Natural killer cell (primary cell): ENCODE measurements at regions of chrX and their contacts with region 1.

Region 1: DNA sequence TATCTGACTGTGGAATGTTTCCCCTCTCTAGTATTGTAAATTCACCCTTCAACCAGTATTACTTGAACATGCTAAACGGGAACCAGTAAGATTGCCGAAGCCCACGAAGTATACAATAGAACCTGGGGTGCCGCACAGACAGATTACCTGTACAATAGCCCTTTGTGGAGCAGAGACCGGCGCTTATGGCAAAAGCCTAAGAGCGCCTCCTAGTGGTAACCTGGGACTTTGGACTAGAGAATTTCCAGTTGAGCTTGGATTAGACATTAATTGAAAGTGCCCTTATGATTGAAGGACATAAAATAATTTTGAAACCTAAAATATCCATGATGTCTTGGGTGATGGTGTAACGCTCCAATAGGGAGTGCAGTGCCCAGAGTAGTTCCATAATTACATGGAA is 14.1 kb downstream of the ZNF157 start:
- DNase-seq: peak; percentile 39 to 88
- ATAC-seq: peak; percentile 71 to 82 (median 76)
- H3K4me3 ChIP-seq: no peak overlapping the region
- H3K4me3 Mint-ChIP-seq: no peak overlapping the region
- H3K27ac ChIP-seq: no peak overlapping the region
- H3K27ac Mint-ChIP-seq: no peak overlapping the region
- H3K4me1 ChIP-seq: peaks cover 15% of the 10 kb centered on the region
- H3K4me1 Mint-ChIP-seq: peaks cover 13 to 19% of the 10 kb centered on the region in 2 donors
- H3K27me3 ChIP-seq: no peaks in the 10 kb centered on the region
- H3K27me3 Mint-ChIP-seq: peaks cover 0 to 11% of the 10 kb centered on the region in 2 donors
- CTCF ChIP-seq: peak; percentile 73

Region 2: DNA sequence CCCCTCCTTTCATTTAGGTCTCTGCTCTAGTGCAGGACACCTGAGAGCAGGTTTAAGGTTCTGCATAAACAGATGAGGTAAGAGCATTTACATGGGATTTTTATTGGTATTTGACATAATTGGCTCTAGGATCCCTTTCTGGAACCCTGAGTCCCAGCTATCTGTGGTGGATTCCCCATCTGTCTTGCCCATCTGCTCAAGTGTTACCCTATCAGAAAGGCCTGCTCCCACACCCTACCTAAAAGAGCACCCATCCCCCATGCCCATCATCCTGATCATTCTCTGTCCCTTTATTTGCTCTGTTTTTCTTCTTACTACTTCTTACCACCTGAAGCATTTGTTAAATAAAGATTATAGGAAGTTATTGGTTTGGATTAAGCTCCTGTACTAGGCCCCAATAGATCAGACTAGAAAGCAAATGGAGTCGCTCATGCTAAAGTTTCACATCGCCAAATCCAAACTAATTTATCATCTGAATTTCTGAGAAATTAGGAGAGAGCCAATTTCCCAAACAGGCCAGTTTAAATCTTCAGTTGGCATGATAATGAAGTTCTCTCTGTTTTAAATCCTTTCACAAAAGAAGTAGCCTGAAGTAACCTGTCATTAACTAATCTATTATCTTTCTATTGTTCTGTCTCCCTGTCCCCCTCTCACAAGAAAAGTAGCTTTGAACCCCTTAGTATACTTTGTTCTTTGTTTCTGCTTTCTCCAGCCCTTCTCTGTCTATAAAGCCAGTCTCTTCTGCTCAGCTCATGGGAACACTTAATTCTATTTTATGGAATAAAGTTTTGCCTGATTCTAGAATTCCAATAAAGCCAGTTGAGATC is 1017.9 kb before region 1 on chrX:
- intact Hi-C with region 1: no loop called
- DNase-seq: no peak
- ATAC-seq: no peak
- H3K4me3 ChIP-seq: no peak overlapping the region
- H3K4me3 Mint-ChIP-seq: no peak overlapping the region
- H3K27ac ChIP-seq: no peak overlapping the region
- H3K27ac Mint-ChIP-seq: no peak overlapping the region
- H3K4me1 ChIP-seq: no peaks in the 10 kb centered on the region
- H3K4me1 Mint-ChIP-seq: no peaks in the 10 kb centered on the region
- H3K27me3 ChIP-seq: no peaks in the 10 kb centered on the region
- H3K27me3 Mint-ChIP-seq: no peaks in the 10 kb centered on the region
- CTCF ChIP-seq: no peak

Region 3: GRCh38 chrX:47523297-47523696 is 138.8 kb after region 1 on chrX:
- intact Hi-C with region 1: loop called (anchors 10 kb)
- DNase-seq: peak; percentile 76 to 85
- ATAC-seq: peak; percentile 96 to 99 (median 98)
- H3K4me3 ChIP-seq: peak overlapping the region; percentile 50
- H3K4me3 Mint-ChIP-seq: peak overlapping the region; percentile 74
- H3K27ac ChIP-seq: no peak overlapping the region
- H3K27ac Mint-ChIP-seq: peak overlapping the region in 1 of 2 donors; percentile 51
- H3K4me1 ChIP-seq: peaks cover 9% of the 10 kb centered on the region
- H3K4me1 Mint-ChIP-seq: no peaks in the 10 kb centered on the region
- H3K27me3 ChIP-seq: no peaks in the 10 kb centered on the region
- H3K27me3 Mint-ChIP-seq: no peaks in the 10 kb centered on the region
- CTCF ChIP-seq: peak; percentile 74